GM12878 (cell line): ENCODE measurements at regions of chr10 and their contacts with region 1.

Region 1: DNA sequence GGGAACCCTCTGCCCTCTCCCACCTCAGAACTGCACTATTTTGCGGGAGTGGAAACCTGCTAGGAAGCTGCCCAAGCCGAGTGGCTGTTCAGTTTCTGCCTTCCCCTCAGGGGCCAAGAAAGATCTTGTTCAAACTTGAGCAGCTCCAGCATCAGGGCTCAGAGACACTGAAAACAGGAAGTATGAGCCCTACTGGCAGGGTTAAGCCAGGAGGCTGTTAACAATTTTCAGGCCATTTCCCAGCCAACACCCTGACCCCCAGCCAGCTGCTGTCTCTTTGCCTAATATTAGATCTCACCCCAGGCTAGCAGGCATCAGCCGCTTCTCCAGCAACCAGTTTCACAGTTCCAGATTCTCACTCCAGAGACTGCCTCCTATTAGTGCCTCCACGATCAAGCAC is 9.2 kb downstream of the PLAU start:
- DNase-seq: no peak
- ATAC-seq: peak; percentile 85
- H3K4me3 ChIP-seq: no peak overlapping the region
- H3K27ac ChIP-seq: no peak overlapping the region
- H3K4me1 ChIP-seq: peaks cover 6% of the 10 kb centered on the region; the same call in 1 of the 2 replicates
- H3K27me3 ChIP-seq: no peaks in the 10 kb centered on the region
- CTCF ChIP-seq: no peak
- EP300 ChIP-seq: no peak
- POLR2A ChIP-seq: no peak
- RAD21 ChIP-seq: no peak

Region 2: DNA sequence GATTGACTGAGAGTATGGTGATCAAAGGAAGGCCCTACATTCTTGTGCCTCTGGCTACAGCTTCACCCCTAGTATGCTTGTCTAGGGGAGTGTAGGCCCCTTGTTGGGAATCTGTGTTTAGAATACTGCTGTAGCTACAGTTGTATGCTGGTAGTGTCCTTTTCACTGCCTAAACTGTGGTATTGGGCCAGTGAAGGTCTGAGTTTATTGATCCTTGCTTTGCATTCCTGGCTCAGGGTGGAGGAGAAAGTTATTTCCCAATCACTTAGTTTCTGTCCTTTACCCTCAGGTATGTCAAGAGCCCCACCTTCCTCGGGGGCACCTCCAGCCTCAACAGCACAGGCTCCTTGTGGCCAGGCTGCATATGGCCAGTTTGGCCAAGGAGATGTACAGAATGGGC is 169.3 kb before region 1 on chr10:
- CTCF ChIA-PET with region 1: no interaction called
- POLR2A ChIA-PET with region 1: no interaction called
- RAD21 ChIA-PET with region 1: no interaction called
- SMC1A ChIA-PET with region 1: no interaction called
- in situ Hi-C with region 1: no loop called
- intact Hi-C with region 1: no loop called
- DNase-seq: no peak
- ATAC-seq: no peak; the same call in 2 of the 3 replicates
- H3K4me3 ChIP-seq: no peak overlapping the region
- H3K27ac ChIP-seq: no peak overlapping the region
- H3K4me1 ChIP-seq: peaks cover 5% of the 10 kb centered on the region
- H3K27me3 ChIP-seq: no peaks in the 10 kb centered on the region
- CTCF ChIP-seq: no peak
- EP300 ChIP-seq: no peak
- POLR2A ChIP-seq: no peak
- RAD21 ChIP-seq: no peak

Region 3: DNA sequence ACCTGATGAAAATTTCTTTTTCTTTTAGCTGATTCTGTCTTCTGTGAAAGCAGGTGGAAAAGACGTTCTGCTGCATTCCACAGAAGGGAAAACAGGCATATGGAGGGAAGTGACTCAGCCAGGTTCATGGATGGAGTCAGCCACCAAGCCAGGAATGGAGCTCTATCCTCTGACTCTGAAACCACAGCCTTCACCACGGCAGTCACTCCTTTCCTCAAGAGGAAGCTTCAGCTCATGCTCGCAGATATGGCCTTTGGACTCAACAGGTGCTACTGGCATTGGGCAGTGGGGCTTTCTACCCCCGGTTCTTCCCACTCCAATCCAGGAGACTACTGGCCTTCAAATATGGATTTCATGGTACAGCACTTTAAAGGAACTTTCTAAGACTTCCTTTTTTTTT is 20.7 kb before region 1 on chr10:
- CTCF ChIA-PET with region 1: interaction called, 6 read pairs
- POLR2A ChIA-PET with region 1: interaction called, 10 read pairs
- RAD21 ChIA-PET with region 1: interaction called, 3 read pairs
- SMC1A ChIA-PET with region 1: interaction called, 1,048 read pairs
- in situ Hi-C with region 1: no loop called
- intact Hi-C with region 1: no loop called
- DNase-seq: no peak
- ATAC-seq: no peak
- H3K4me3 ChIP-seq: no peak overlapping the region
- H3K27ac ChIP-seq: no peak overlapping the region
- H3K4me1 ChIP-seq: no peaks in the 10 kb centered on the region
- H3K27me3 ChIP-seq: no peaks in the 10 kb centered on the region; a peak in 1 of 4 replicates
- CTCF ChIP-seq: no peak
- EP300 ChIP-seq: no peak
- POLR2A ChIP-seq: no peak
- RAD21 ChIP-seq: no peak

Region 4: DNA sequence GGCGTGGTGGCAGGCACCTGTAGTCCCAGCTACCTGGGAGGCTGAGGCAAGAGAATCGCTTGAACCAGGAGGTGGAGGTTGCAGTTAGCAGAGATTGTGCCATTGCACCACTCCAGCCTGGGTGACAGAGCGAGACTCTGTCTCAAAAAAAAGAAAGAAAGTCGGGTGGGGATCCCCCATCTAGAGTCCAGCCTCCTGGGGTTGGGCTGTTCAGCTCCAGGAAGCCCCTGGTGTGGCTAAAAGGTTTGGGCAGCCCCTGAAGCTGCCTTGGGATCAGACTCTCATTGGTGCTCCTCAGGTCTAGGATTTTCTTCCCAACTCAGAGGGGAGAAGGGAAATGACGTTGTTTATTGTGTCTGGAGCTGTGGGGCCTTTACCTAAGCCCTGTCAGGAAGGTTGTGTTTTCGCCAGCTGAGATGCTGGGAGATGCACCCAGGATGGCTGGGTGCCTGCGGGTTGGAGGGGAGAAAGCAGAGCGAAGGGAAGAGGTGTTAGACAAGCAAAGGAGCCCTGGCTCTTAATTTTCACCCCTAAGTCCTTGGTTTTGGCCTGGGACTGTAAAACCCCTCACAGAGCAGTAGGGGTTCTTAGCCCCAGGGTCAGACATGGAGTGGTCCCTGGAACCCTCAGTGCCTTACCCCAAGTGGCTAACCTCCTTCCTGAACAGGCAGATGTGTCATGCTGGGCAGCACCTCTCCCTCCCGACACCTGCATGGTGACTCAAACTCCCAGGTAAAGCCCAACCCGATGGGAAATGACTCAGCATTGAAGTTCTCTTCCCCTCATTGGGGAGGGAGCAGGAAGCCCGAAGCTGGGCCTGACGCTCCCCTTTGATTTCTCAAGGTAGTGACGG is 11.9 kb after region 1 on chr10:
- CTCF ChIA-PET with region 1: interaction called, 11 read pairs
- POLR2A ChIA-PET with region 1: interaction called, 11 read pairs
- RAD21 ChIA-PET with region 1: interaction called, 3 read pairs
- SMC1A ChIA-PET with region 1: interaction called, 21 read pairs
- in situ Hi-C with region 1: no loop called
- intact Hi-C with region 1: no loop called
- DNase-seq: peak; percentile 50
- ATAC-seq: peak; percentile 89
- H3K4me3 ChIP-seq: no peak overlapping the region
- H3K27ac ChIP-seq: peak overlapping the region; percentile 68
- H3K4me1 ChIP-seq: peaks cover 13% of the 10 kb centered on the region
- H3K27me3 ChIP-seq: no peaks in the 10 kb centered on the region
- CTCF ChIP-seq: no peak
- EP300 ChIP-seq: 0 out of 4 replicates have a peak, but pooled peaks of 1 of the 2 experiments have one; percentile 41
- POLR2A ChIP-seq: 0 out of 2 replicates have a peak, but pooled peaks have one; percentile 27
- RAD21 ChIP-seq: 0 out of 2 replicates have a peak, but pooled peaks have one; percentile 11